Activated T-helper 2 cell treated with anti-CD3 and anti-CD28 coated beads, Interferon-gamma antibody, Interleukin-2, Interleukin-4, amounts not matched to agents 10 μg/mL and 5 μg/mL and 100 μg/mL, durations not matched to agents 14 hours and 24 hours and 36 hours (primary cell): ENCODE measurements at regions of chr1 and their contacts with region 1.

Region 1: DNA sequence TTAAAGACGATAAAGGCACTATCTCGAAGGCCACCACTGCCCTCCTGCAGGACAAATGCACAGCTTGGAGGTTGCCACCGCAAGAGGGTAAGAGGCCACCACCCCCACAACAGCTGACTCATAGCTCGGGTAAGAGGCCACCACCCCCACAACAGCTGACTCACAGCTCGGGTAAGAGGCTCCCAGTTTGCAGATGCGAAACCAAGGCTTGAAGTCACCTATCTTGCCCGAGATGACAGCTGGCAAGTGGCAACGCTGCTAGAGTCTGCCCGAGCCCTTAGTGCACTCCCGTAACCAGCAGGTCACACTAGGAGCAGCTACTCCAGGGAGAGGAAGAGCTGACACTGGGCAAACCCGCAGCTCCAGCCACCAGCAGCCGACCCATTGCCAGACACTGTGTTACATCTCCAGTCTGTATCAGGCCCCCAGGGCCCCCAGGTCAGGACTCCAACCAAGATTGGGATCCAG is 17.1 kb upstream of the SPSB1 start:
- DNase-seq: peak; percentile 58
- H3K4me3 Mint-ChIP-seq: no peak overlapping the region
- H3K27ac Mint-ChIP-seq: peak overlapping the region; percentile 25
- H3K4me1 Mint-ChIP-seq: peaks cover 33% of the 10 kb centered on the region
- H3K27me3 Mint-ChIP-seq: no peaks in the 10 kb centered on the region

Region 2: DNA sequence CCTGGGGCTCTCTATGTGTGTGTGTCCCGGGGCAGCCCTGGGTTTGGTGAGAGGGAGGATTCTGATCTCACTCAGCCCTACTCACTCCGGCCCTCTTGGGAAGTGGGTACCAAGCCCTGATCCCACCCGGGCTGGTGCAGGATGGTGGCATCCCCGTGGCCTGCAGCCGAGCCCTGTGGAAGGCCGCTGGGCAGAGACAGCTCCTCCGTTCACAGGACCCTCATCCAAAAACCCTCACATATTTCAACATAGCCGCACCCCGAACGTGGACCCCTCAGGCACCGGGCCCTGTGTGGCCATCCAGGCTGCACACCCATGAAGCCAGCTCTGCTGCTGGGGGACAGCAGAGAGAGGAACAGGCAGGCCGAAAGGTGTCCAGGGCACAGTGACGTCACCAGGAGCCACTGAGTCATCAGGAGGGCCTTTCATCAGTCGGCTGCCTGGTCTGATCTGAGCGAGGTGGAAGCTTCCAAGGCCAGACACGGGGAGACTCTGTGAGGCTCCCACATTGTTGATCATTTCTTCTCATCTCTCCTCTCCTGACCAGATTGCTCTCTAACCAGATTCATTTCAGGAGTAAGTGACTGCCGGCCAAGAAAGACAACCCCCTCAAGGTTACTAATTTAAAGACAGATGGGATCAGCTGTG is 130.5 kb before region 1 on chr1:
- intact Hi-C with region 1: no loop called
- DNase-seq: no peak
- H3K4me3 Mint-ChIP-seq: no peak overlapping the region
- H3K27ac Mint-ChIP-seq: no peak overlapping the region
- H3K4me1 Mint-ChIP-seq: peaks cover 11% of the 10 kb centered on the region
- H3K27me3 Mint-ChIP-seq: no peaks in the 10 kb centered on the region

Region 3: DNA sequence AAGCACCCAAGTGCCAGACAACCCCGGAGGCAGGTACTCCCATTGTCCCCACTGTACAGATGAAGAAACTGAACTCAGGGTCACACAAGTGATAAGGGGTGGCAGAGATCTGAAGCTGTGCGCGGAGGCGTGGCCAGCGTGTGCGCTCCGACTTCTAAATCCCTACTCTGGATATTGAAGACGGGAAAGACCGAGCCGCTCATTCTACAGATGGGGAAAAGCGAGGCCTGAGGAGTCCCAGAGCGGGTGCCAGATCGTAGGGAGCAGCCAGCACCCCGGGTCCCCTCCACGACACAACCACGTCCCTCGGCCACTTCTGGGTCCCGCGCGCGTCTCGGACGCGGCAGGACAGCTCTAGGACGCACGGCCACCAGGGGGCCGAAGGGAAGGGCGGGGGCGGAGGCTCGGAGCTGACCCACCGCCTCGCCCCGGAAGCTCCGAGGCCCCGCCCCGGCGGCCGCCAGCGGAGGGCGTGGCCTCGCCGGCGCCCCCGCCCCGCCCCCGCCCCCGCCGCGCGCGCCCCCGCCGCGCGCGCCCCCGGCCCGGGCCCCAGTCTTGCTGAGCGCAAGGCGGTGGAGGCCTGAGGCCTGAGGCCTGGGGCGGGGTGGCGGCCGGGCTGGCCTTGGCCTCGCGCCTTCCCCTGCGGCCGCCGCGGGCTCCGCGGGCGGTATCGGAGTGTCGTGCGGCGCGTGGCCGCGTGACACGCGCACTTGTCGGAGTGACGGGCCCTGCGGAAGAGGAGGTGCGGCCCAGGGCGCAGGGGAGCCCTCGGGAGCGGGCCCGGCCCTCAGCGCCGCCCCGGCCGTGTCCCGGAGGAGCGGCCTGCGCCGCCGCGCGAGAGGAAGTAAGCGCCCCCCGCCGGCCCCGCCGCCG is 41.1 kb before region 1 on chr1 and contains the start of gene H6PD:
- intact Hi-C with region 1: loop called (anchors 5 kb)
- DNase-seq: peak; percentile 79
- H3K4me3 Mint-ChIP-seq: peak within 1 kb of the TSS; percentile 88
- H3K27ac Mint-ChIP-seq: peak within 1 kb of the TSS; percentile 91
- H3K4me1 Mint-ChIP-seq: peaks cover 42% of the 10 kb centered on the region
- H3K27me3 Mint-ChIP-seq: no peaks in the 10 kb centered on the region
- total RNA-seq, gene H6PD: 27.1 and 28.0 TPM in 2 replicates

Region 4: GRCh38 chr1:9249534-9250410 is 25.8 kb before region 1 on chr1:
- intact Hi-C with region 1: no loop called
- DNase-seq: peak; percentile 23
- H3K4me3 Mint-ChIP-seq: no peak overlapping the region
- H3K27ac Mint-ChIP-seq: no peak overlapping the region
- H3K4me1 Mint-ChIP-seq: peaks cover 21% of the 10 kb centered on the region
- H3K27me3 Mint-ChIP-seq: no peaks in the 10 kb centered on the region

Region 5: GRCh38 chr1:9388335-9389180 is 113.0 kb after region 1 on chr1:
- intact Hi-C with region 1: no loop called
- DNase-seq: no peak
- H3K4me3 Mint-ChIP-seq: no peak overlapping the region
- H3K27ac Mint-ChIP-seq: no peak overlapping the region
- H3K4me1 Mint-ChIP-seq: peaks cover 20% of the 10 kb centered on the region
- H3K27me3 Mint-ChIP-seq: peaks cover 8% of the 10 kb centered on the region